ENCODE measurements at regions of chr17 and their contacts with region 1.

Region 1: DNA sequence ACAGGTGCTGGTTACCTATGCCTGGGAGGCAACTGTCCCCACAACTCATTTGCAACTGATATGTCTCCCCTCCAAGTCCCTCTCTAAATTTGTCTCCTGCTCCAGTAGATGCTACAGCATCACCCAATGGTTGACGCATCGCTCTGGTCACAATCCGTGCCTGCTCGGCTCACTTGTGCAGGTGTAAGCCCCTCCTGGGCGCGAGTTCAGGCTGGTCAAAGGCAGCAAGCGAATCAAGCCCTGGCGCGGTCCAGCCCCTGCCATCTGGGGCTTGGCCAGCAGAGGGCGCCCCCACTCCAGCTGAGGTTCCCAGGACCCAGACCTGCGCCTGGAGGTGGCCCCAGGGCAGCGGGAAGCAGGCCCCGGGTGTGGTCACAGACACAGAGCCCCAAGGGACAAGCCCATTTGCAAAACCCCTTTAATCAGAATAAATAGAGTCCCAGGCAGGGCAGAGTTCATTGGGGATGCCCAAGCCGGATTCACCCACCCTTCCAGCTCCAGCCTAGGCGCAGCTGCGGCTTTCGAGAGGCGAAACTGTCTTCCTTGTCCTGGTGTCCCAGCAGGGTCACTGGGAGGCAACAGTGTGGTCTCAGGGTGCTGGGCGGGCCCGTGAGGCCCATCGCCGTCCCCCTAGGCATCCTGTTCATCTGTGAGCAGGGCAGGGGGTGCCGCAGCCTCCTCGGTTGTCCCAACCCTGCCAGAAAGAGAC is 15.9 kb downstream of the TMC6 start:
- DNase-seq: peak; percentile 96
- H3K4me3 ChIP-seq: no peak overlapping the region
- H3K27ac ChIP-seq: peak overlapping the region in 6 of 8 donors; percentile 35 to 79 (median 58)
- H3K4me1 ChIP-seq: peaks cover 11 to 83% (median 34%) of the 10 kb centered on the region in 6 donors
- H3K27me3 ChIP-seq: no peaks in the 10 kb centered on the region
- CTCF ChIP-seq: peak; percentile 96 to 100 (median 99)
- POLR2A ChIP-seq: no peak

Region 2: DNA sequence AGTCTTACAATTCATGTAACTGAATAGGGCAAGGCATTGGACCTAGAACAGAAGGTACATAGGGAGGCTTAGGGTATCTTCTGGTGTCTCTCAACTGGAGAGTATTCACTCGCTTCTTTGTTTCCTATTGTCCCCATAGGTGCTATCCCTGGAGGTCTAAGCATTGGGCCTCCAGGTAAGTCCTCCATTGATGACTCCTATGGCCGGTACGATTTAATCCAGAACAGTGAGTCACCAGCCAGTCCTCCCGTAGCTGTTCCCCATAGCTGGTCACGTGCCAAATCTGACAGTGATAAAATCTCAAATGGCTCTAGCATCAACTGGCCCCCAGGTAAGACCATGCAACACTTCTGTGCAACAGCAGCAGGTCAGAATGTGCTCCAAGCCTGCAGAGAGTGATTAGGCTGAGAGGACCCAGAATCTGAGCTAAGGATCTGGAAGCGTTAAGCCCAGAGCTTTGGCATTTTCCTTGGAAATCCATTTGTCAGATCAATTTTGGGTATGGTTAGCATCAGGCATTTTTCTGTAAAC is 19.8 kb before region 1 on chr17:
- intact Hi-C with region 1: no loop called
- DNase-seq: no peak
- H3K4me3 ChIP-seq: no peak overlapping the region
- H3K27ac ChIP-seq: no peak overlapping the region
- H3K4me1 ChIP-seq: peaks cover 0 to 12% (median 8%) of the 10 kb centered on the region in 6 donors
- H3K27me3 ChIP-seq: no peaks in the 10 kb centered on the region
- CTCF ChIP-seq: no peak
- POLR2A ChIP-seq: no peak

Region 3: GRCh38 chr17:78176548-78177025 is 63.9 kb after region 1 on chr17:
- intact Hi-C with region 1: loop called (anchors 5 kb)
- DNase-seq: peak; percentile 96
- H3K4me3 ChIP-seq: no peak overlapping the region
- H3K27ac ChIP-seq: peak overlapping the region in 4 of 8 donors; percentile 85 to 96 (median 92)
- H3K4me1 ChIP-seq: peaks cover 61 to 90% (median 75%) of the 10 kb centered on the region in 6 donors
- H3K27me3 ChIP-seq: no peaks in the 10 kb centered on the region
- CTCF ChIP-seq: peak; percentile 86 to 98 (median 93)
- POLR2A ChIP-seq: no peak

Region 4: DNA sequence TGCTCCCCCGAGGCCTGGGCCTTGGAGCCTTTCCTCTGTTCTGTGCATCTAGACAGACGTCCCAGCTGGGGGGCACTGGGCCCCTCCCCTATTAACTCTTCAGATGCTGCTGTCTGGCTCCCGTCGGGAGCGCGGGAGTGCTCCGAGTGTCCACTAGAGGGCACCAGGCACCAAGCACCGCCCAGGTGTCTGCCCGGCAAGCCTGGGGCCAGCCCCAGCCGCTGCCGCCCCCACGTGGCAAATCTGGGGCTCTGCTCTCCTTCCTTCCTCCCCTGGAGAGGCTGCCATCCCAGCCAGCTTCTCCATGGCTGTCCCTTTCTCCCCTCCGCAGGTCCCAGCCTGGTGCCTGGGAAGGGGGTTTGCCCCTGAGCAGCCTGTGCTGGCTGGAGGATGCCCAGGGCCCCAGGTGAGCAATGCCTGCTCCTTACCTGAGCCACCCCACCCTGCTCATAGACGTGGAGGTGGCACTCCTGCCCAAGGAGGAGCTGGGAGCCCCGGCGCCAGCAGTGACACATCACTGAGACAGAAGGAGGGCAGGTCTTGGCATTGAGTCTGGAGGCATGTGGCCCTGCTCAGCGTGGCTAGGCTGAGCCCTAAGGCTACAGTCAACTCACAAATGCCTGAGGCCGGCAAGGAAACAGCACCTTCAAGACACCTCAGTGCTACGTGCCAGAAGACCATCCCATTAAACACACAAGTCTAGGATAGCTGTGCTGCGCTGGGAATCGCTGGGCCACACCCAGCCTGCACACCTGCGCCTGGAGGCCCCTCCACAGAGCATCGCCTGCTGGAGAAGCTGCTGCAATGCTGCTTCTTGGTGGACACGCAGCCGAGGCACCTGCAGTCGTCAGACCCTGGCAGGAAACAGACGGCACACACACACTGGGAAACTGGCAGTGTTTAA is 138.5 kb after region 1 on chr17:
- intact Hi-C with region 1: loop called (anchors 5 kb)
- DNase-seq: peak; percentile 98
- H3K4me3 ChIP-seq: peak overlapping the region in 4 of 8 donors; percentile 7 to 50 (median 14)
- H3K27ac ChIP-seq: peak overlapping the region in 5 of 8 donors; percentile 25 to 94 (median 71)
- H3K4me1 ChIP-seq: peaks cover 32 to 78% (median 50%) of the 10 kb centered on the region in 6 donors
- H3K27me3 ChIP-seq: no peaks in the 10 kb centered on the region
- CTCF ChIP-seq: peak; percentile 95 to 100 (median 99)
- POLR2A ChIP-seq: no peak

Measured in spleen (tissue), 13 donors.